Activated CD4-positive, alpha-beta memory T cell treated with anti-CD3 and anti-CD28 coated beads for 36 hours (primary cell): ENCODE measurements at regions of chr4 and their contacts with region 1.

Region 1: GRCh38 chr4:25993395-25994185 is 79.6 kb downstream of the SMIM20 start:
- DNase-seq: peak; percentile 55
- H3K4me3 Mint-ChIP-seq: no peak overlapping the region
- H3K27ac Mint-ChIP-seq: no peak overlapping the region
- H3K4me1 Mint-ChIP-seq: peaks cover 12% of the 10 kb centered on the region
- H3K27me3 Mint-ChIP-seq: no peaks in the 10 kb centered on the region

Region 2: GRCh38 chr4:25865586-25865985 is 128.0 kb before region 1 on chr4:
- CTCF ChIA-PET with region 1: no interaction called
- POLR2A ChIA-PET with region 1: no interaction called
- intact Hi-C with region 1: no loop called
- DNase-seq: no peak
- H3K4me3 Mint-ChIP-seq: no peak overlapping the region
- H3K27ac Mint-ChIP-seq: no peak overlapping the region
- H3K4me1 Mint-ChIP-seq: peaks cover 13% of the 10 kb centered on the region
- H3K27me3 Mint-ChIP-seq: peaks cover 2% of the 10 kb centered on the region

Region 3: DNA sequence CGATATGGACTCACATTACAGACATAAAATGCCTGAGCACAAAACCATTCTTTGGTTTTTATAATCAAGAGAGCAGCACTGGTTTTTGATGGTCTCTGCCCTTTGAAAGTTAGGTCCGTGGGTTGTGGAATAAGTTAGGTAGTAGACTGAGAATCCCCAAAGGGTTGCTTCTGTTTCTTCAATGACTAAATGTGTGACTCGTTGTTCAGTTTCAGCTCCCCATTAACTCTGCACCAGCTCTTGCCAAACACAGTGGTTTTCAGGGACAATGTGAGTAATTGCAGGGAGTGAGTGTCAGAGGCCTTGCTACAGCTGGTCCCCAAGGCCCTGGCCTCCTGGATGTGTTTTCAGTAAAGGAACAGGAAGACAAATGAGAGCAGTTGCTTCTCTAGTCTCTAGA is 54.8 kb before region 1 on chr4:
- CTCF ChIA-PET with region 1: interaction called, 4 read pairs
- POLR2A ChIA-PET with region 1: no interaction called
- intact Hi-C with region 1: loop called (anchors 2 kb)
- DNase-seq: peak; percentile 77
- H3K4me3 Mint-ChIP-seq: no peak overlapping the region
- H3K27ac Mint-ChIP-seq: peak overlapping the region; percentile 82
- H3K4me1 Mint-ChIP-seq: peaks cover 24% of the 10 kb centered on the region
- H3K27me3 Mint-ChIP-seq: peaks cover 20% of the 10 kb centered on the region

Region 4: GRCh38 chr4:25972984-25973745 is 20.4 kb before region 1 on chr4:
- CTCF ChIA-PET with region 1: interaction called, 16 read pairs
- POLR2A ChIA-PET with region 1: no interaction called
- intact Hi-C with region 1: no loop called
- DNase-seq: no peak
- H3K4me3 Mint-ChIP-seq: no peak overlapping the region
- H3K27ac Mint-ChIP-seq: no peak overlapping the region
- H3K4me1 Mint-ChIP-seq: no peaks in the 10 kb centered on the region
- H3K27me3 Mint-ChIP-seq: peaks cover 7% of the 10 kb centered on the region

Region 5: GRCh38 chr4:26023203-26023972 is 29.8 kb after region 1 on chr4:
- CTCF ChIA-PET with region 1: interaction called, 14 read pairs
- POLR2A ChIA-PET with region 1: no interaction called
- intact Hi-C with region 1: loop called (anchors 2 kb)
- DNase-seq: no peak
- H3K4me3 Mint-ChIP-seq: no peak overlapping the region
- H3K27ac Mint-ChIP-seq: no peak overlapping the region
- H3K4me1 Mint-ChIP-seq: peaks cover 17% of the 10 kb centered on the region
- H3K27me3 Mint-ChIP-seq: peaks cover 6% of the 10 kb centered on the region

Region 6: DNA sequence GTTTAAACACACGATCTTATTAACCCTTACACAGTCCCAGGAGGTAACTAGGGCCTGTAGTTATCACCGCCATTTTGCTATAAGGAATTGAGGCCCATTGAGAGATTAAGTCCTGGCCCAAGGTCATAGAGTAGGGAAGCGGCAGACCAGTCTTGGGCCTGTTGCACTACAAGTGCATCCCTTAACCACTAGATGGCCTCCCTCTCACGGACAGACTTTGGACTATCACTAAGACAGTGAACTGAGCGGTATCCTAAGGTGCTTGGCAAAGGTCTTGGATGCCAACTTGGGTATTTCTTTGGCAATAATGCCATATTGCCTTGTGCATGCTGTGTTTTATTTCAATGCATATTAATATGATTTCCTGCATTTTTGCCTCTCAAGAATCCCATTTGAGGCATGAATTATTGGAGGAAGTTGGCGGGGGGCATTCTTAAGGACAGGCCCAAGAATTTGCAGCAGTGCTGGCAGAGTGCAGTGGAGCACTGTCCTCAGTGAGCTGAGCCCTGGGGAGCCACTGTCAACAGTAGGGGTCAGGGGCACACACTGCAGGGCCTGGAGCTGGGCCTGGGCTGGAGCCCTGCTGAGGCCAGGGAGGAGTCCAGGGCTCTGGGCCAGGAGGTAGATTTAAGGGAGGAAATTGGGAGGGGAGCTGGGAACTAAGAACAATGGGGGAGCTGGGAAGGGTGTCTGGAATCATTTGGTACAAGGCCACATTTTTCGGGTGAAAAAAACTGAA is 67.8 kb after region 1 on chr4:
- CTCF ChIA-PET with region 1: interaction called, 16 read pairs
- POLR2A ChIA-PET with region 1: no interaction called
- intact Hi-C with region 1: no loop called
- DNase-seq: peak; percentile 43
- H3K4me3 Mint-ChIP-seq: no peak overlapping the region
- H3K27ac Mint-ChIP-seq: no peak overlapping the region
- H3K4me1 Mint-ChIP-seq: peaks cover 26% of the 10 kb centered on the region
- H3K27me3 Mint-ChIP-seq: no peaks in the 10 kb centered on the region

Region 7: GRCh38 chr4:26330186-26330787 is 336.7 kb after region 1 on chr4:
- CTCF ChIA-PET with region 1: interaction called, 15 read pairs
- POLR2A ChIA-PET with region 1: no interaction called
- intact Hi-C with region 1: loop called (anchors 2 kb)
- DNase-seq: no peak
- H3K4me3 Mint-ChIP-seq: no peak overlapping the region
- H3K27ac Mint-ChIP-seq: no peak overlapping the region
- H3K4me1 Mint-ChIP-seq: peaks cover 53% of the 10 kb centered on the region
- H3K27me3 Mint-ChIP-seq: no peaks in the 10 kb centered on the region